ENCODE measurements at regions of chr11 and their contacts with region 1.

Region 1: DNA sequence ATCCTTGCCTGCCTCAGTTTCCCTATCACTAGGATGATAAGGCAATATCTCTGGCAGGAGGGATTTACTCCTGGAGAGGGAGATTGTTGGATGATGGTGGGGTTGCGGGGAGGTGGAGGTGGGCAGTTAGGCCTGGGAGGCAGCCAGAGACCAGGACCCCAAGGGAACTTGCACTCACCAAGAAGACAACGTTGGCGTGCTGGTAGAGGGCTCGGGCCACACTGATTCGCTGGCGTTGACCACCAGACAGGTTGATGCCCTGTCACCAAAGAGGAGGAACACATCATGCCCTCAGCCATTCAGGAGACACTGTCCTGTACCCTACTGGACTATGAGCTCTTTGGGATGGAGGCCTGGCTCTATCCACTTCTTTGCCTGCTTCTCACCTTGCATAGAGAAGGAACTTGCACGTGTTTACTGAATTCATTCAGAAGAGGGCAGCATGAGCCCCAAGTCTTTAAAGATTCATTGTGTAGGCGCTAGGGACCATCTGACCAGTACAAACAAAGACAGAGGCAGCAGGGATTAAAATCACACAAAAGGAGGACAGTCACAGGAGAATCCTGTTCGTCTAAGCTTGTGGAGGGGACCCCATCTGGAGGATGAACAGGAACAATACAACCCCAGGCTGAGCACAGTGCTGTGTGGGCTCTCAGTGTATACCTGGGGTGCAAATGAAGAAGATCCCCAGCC is 24.2 kb upstream of the KCNJ11 start:
- DNase-seq: no peak
- H3K4me3 ChIP-seq: no peak overlapping the region
- H3K27ac ChIP-seq: no peak overlapping the region
- H3K4me1 ChIP-seq: peaks cover 0 to 4% (median 3%) of the 10 kb centered on the region in 4 experiments; a peak in 3 of 7 replicates
- H3K27me3 ChIP-seq: no peaks in the 10 kb centered on the region; a peak in 3 of 7 replicates
- CTCF ChIP-seq: no peak; a peak in 1 of 4 replicates
- EP300 ChIP-seq: no peak
- POLR2A ChIP-seq: no peak
- RAD21 ChIP-seq: peak; percentile 29 to 40

Region 2: DNA sequence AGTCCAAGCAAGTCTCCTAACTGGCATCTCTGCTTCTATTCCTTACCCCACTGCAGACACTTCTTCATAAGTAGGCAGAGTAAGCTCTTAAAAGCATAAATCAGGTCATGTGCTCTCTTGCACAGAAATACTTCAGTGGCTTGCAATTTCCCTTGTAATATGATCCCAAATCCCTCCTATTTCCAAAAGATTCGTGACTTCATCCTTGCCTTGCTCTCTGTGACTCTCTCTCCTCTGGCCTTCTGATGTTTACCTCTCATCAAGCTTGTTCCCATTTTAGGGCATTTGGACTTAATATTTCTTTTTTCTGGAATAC is 98.4 kb before region 1 on chr11:
- CTCF ChIA-PET with region 1: no interaction called
- POLR2A ChIA-PET with region 1: no interaction called
- DNase-seq: no peak
- H3K4me3 ChIP-seq: no peak overlapping the region
- H3K27ac ChIP-seq: no peak overlapping the region
- H3K4me1 ChIP-seq: no peaks in the 10 kb centered on the region
- H3K27me3 ChIP-seq: no peaks in the 10 kb centered on the region
- CTCF ChIP-seq: no peak
- EP300 ChIP-seq: no peak
- POLR2A ChIP-seq: no peak
- RAD21 ChIP-seq: no peak

Region 3: GRCh38 chr11:17394743-17395390 is 17.8 kb before region 1 on chr11:
- CTCF ChIA-PET with region 1: interaction called, 10 read pairs
- POLR2A ChIA-PET with region 1: interaction called, 3 read pairs
- DNase-seq: no peak
- H3K4me3 ChIP-seq: no peak overlapping the region
- H3K27ac ChIP-seq: no peak overlapping the region
- H3K4me1 ChIP-seq: peaks cover 0 to 3% (median under 1%) of the 10 kb centered on the region in 4 experiments; a peak in 3 of 7 replicates
- H3K27me3 ChIP-seq: peaks cover 0 to 6% (median 0%) of the 10 kb centered on the region in 4 experiments; a peak in 4 of 7 replicates
- CTCF ChIP-seq: peak; percentile 18 to 54 (median 48); a peak in 3 of 4 replicates
- EP300 ChIP-seq: no peak
- POLR2A ChIP-seq: no peak
- RAD21 ChIP-seq: peak; percentile 20 to 39; a peak in 2 of 4 replicates

Region 4: DNA sequence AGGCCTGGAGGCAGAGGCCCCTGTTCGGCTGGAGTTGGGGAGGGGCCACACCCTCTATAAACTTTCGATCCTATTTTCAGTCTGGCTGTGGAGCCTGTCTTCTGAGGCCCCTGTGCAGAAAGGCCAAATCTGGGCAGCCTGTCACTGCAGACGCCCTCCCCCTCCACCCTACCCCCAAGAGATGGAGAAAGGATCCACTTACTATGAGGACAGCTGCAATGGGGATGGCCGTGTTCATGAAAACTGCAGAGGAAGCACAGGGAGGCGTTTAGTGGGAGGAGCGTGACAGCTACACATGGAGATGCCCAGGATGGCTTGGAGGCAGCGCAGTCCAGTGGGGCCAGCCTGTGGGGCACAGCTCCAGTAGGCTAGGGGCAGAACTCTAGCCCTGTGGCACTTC is 19.4 kb after region 1 on chr11:
- CTCF ChIA-PET with region 1: interaction called, 11 read pairs
- POLR2A ChIA-PET with region 1: no interaction called
- DNase-seq: no peak
- H3K4me3 ChIP-seq: no peak overlapping the region
- H3K27ac ChIP-seq: no peak overlapping the region
- H3K4me1 ChIP-seq: no peaks in the 10 kb centered on the region; a peak in 1 of 7 replicates
- H3K27me3 ChIP-seq: no peaks in the 10 kb centered on the region
- CTCF ChIP-seq: no peak
- EP300 ChIP-seq: no peak
- POLR2A ChIP-seq: no peak
- RAD21 ChIP-seq: no peak